K562 (cell line): ENCODE measurements at regions of chr15 and their contacts with region 1.

Region 1: GRCh38 chr15:79923515-79924395 is 26.9 kb upstream of the MTHFS start:
- DNase-seq: peak; percentile 96 to 98 (median 98)
- ATAC-seq: peak; percentile 97
- H3K4me3 ChIP-seq: peak overlapping the region; percentile 93
- H3K27ac ChIP-seq: peak overlapping the region; percentile 91
- H3K4me1 ChIP-seq: peaks cover 10 to 17% of the 10 kb centered on the region in 2 experiments; a peak in 4 of 5 replicates
- H3K27me3 ChIP-seq: no peaks in the 10 kb centered on the region
- CTCF ChIP-seq: no peak
- EP300 ChIP-seq: no peak
- POLR2A ChIP-seq: peak; percentile 91
- RAD21 ChIP-seq: no peak

Region 2: DNA sequence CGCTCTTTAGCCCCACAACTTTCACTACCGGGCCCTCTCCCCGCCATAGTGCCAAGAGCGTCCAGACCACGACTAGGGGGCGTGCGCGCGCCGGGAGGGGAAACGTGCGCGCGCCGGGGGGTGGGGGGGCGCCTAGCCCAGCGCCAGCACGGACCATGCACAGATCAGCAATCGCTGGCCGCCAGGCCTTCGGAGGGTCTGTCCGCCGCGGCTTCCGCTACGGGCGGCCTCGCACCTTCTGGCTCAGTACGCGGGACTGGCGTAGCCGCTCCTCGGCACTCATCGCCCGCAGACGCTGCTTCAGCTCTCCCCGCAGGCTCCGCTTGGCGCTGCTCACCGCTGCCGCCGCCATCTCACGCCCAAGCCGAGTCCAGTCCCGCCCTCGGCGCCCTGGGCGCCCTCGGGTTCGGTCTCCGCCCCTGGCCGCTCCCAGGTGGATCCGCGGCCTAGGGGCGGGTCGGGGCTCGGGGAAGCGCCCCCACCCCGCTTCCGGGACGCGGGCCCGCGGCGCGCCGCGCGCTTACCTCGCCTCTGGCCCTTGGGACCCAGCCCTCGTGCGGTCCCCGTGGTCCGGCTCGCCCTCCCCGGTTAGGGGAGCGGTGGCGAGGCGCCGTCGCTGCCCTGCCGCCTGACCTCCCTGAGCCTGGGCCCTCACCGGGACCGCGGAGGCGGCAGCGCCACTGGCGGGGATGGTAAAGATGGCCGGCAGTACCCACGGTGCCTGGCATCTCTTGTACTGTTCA is 26.9 kb before region 1 on chr15 and contains the start of gene MTHFS:
- CTCF ChIA-PET with region 1: no interaction called
- POLR2A ChIA-PET with region 1: interaction called, 15 read pairs
- in situ Hi-C with region 1: no loop called
- intact Hi-C with region 1: no loop called
- DNase-seq: peak; percentile 89 to 93 (median 92)
- ATAC-seq: peak; percentile 98
- H3K4me3 ChIP-seq: peak within 1 kb of the TSS; percentile 69
- H3K27ac ChIP-seq: peak within 1 kb of the TSS; percentile 93
- H3K4me1 ChIP-seq: peaks cover 3 to 8% of the 10 kb centered on the region in 2 experiments
- H3K27me3 ChIP-seq: no peaks in the 10 kb centered on the region
- CTCF ChIP-seq: peak; percentile 41 to 60 (median 49); a peak in 5 of 6 replicates
- EP300 ChIP-seq: no peak
- POLR2A ChIP-seq: peak; percentile 97
- RAD21 ChIP-seq: peak; percentile 35 to 41
- polyA plus RNA-seq, gene MTHFS: 17.8 to 23.6 TPM

Region 3: GRCh38 chr15:80105595-80106450 is 182.1 kb after region 1 on chr15:
- CTCF ChIA-PET with region 1: no interaction called
- POLR2A ChIA-PET with region 1: no interaction called
- in situ Hi-C with region 1: no loop called
- intact Hi-C with region 1: no loop called
- DNase-seq: no peak
- ATAC-seq: no peak
- H3K4me3 ChIP-seq: no peak overlapping the region
- H3K27ac ChIP-seq: no peak overlapping the region
- H3K4me1 ChIP-seq: peaks cover 0 to 8% of the 10 kb centered on the region in 2 experiments; a peak in 2 of 5 replicates
- H3K27me3 ChIP-seq: no peaks in the 10 kb centered on the region
- CTCF ChIP-seq: no peak
- EP300 ChIP-seq: no peak
- POLR2A ChIP-seq: no peak
- RAD21 ChIP-seq: no peak

Region 4: DNA sequence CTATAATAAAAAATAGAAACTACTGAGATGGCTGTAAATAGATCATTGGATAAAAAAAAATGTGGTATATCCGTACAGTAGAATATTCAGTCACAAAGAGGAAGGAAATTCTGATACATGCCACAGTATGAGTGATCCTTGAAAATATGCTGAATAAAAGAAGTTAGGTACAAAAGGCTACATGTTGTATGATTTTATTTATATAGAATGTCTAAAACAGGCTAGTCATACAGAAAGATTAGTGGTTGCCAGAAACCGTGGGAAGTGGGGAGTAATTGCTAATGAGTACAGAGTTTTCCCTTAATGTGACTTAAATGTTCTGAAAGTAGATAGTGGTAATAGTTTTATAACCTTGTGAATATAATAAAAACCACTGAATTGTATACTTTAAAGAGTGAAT is 204.2 kb after region 1 on chr15:
- CTCF ChIA-PET with region 1: no interaction called
- POLR2A ChIA-PET with region 1: no interaction called
- in situ Hi-C with region 1: no loop called
- intact Hi-C with region 1: no loop called
- DNase-seq: no peak
- ATAC-seq: no peak
- H3K4me3 ChIP-seq: no peak overlapping the region
- H3K27ac ChIP-seq: no peak overlapping the region
- H3K4me1 ChIP-seq: no peaks in the 10 kb centered on the region
- H3K27me3 ChIP-seq: no peaks in the 10 kb centered on the region
- CTCF ChIP-seq: no peak
- EP300 ChIP-seq: no peak
- POLR2A ChIP-seq: no peak
- RAD21 ChIP-seq: no peak

Region 5: GRCh38 chr15:80159811-80160569 is 236.2 kb after region 1 on chr15:
- CTCF ChIA-PET with region 1: no interaction called
- POLR2A ChIA-PET with region 1: interaction called, 3 read pairs
- in situ Hi-C with region 1: no loop called
- intact Hi-C with region 1: loop called (anchors 2 kb)
- DNase-seq: peak in 1 of 4 experiments; percentile 11
- ATAC-seq: no peak; the same call in 2 of the 3 replicates
- H3K4me3 ChIP-seq: no peak overlapping the region
- H3K27ac ChIP-seq: peak overlapping the region; percentile 74
- H3K4me1 ChIP-seq: peaks cover 31 to 38% of the 10 kb centered on the region in 2 experiments
- H3K27me3 ChIP-seq: no peaks in the 10 kb centered on the region
- CTCF ChIP-seq: no peak
- EP300 ChIP-seq: no peak
- POLR2A ChIP-seq: no peak
- RAD21 ChIP-seq: no peak